Common myeloid progenitor, CD34-positive (primary cell): ENCODE measurements at regions of chrX and their contacts with region 1.

Region 1: DNA sequence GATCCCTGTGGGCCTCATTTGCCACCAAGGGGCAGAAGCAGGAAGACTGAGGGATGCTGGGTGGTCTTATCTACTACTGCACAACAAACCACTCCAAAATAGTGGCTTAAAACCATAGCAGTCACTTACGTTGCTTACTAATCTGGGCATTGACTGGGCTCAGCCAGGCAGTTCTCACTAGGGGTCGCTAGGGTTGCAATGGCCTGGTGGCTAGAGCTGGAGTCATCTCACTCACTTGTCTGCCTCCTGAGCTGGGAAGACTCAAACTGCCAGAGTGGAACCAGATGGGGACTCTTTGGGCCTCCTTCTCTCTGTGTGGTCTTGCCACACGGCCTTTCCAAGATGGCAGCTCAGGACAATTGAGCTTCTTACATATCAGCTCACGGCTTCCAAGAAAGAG is 216.3 kb upstream of the BCOR start:
- DNase-seq: peak; percentile 32 to 60 (median 53)
- H3K4me3 ChIP-seq: no peak overlapping the region
- H3K27ac ChIP-seq: no peak overlapping the region
- H3K4me1 ChIP-seq: peaks cover 0 to 9% (median 2%) of the 10 kb centered on the region in 4 experiments
- H3K27me3 ChIP-seq: peaks cover 0 to 2% (median 0%) of the 10 kb centered on the region in 5 experiments

Region 2: DNA sequence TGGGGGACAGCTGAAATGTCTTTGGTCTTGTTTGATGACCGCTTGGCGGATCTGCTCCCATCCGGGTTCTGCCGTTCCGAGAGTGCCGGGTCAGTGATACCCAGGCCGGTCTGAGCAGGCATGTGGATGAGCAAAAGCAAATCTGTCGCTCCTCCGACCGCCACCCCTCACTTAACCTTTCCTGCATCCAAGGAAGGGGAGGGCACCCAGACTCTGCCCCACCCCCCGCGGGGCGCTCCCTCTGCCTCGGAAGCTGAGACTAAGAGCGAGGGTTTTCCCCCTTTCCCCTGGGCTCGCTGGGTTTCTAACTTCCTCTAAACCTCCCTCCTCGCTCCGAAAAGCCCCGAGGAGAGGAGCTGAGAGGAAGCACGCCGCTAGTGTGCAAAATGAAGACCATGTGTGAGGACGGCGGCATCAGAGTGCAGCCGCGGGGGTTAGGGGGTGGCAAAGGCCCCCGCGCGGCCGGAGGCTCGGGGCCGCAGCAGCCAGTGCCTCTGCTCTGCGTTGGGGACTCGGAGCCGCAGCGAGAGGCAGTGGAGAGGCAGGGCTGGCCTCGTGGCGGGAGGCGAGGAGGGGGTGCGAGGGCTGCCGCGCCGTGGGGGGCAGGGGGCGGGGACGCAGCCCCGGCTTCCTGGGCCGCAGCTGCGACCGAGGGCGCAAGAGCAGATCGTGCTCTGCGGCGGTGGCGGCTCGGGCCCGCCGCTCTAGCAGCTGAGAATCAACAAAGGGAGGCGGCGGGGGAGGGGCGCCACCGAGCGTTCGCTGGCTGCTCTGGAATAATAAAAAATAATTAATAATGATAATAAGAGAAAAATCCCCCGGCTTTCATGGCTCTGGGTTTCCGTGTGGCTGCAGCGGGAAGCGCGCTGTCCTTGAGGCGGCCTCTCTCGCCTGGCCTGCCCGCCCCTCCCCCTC is 160.5 kb before region 1 on chrX:
- CTCF ChIA-PET with region 1: no interaction called
- POLR2A ChIA-PET with region 1: no interaction called
- DNase-seq: peak; percentile 55 to 86 (median 86)
- H3K4me3 ChIP-seq: peak overlapping the region; percentile 26 to 75 (median 59)
- H3K27ac ChIP-seq: peak overlapping the region in 1 of 2 experiments; percentile 64
- H3K4me1 ChIP-seq: peaks cover 11 to 81% (median 66%) of the 10 kb centered on the region in 4 experiments
- H3K27me3 ChIP-seq: peaks cover 0 to 97% (median 0%) of the 10 kb centered on the region in 5 experiments

Region 3: GRCh38 chrX:40298572-40299479 is 15.2 kb before region 1 on chrX:
- CTCF ChIA-PET with region 1: interaction called, 11 read pairs
- POLR2A ChIA-PET with region 1: no interaction called
- DNase-seq: peak in 1 of 3 donors; percentile 28
- H3K4me3 ChIP-seq: no peak overlapping the region
- H3K27ac ChIP-seq: no peak overlapping the region
- H3K4me1 ChIP-seq: peaks cover 0 to 8% (median 0%) of the 10 kb centered on the region in 4 experiments
- H3K27me3 ChIP-seq: peaks cover 0 to 10% (median 0%) of the 10 kb centered on the region in 5 experiments

Region 4: GRCh38 chrX:40343319-40343718 is 29.2 kb after region 1 on chrX:
- CTCF ChIA-PET with region 1: no interaction called
- POLR2A ChIA-PET with region 1: no interaction called
- DNase-seq: no peak
- H3K4me3 ChIP-seq: no peak overlapping the region
- H3K27ac ChIP-seq: no peak overlapping the region
- H3K4me1 ChIP-seq: no peaks in the 10 kb centered on the region
- H3K27me3 ChIP-seq: no peaks in the 10 kb centered on the region

Region 5: DNA sequence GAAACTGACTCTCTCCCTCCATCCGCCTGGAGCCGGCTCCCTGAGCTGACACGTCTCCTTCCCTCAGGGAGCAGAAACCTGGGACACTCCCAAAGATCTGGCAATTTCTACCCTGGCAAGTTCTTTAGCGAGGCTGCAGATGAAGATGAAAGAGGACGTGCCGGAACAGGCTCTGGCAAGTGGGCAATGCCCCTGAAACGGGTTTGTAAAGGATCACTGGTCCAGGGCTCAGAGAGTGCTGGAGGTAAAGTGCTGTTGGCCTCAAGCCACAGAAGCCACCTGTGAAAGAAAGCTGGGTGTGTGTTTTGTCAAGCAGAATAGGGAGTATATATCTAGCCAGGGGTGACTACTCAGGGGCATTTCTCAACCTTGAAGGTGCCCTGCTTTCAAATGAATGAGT is 135.3 kb after region 1 on chrX:
- CTCF ChIA-PET with region 1: no interaction called
- POLR2A ChIA-PET with region 1: no interaction called
- DNase-seq: no peak
- H3K4me3 ChIP-seq: no peak overlapping the region
- H3K27ac ChIP-seq: no peak overlapping the region
- H3K4me1 ChIP-seq: no peaks in the 10 kb centered on the region
- H3K27me3 ChIP-seq: peaks cover 0 to 21% (median 0%) of the 10 kb centered on the region in 5 experiments

Region 6: DNA sequence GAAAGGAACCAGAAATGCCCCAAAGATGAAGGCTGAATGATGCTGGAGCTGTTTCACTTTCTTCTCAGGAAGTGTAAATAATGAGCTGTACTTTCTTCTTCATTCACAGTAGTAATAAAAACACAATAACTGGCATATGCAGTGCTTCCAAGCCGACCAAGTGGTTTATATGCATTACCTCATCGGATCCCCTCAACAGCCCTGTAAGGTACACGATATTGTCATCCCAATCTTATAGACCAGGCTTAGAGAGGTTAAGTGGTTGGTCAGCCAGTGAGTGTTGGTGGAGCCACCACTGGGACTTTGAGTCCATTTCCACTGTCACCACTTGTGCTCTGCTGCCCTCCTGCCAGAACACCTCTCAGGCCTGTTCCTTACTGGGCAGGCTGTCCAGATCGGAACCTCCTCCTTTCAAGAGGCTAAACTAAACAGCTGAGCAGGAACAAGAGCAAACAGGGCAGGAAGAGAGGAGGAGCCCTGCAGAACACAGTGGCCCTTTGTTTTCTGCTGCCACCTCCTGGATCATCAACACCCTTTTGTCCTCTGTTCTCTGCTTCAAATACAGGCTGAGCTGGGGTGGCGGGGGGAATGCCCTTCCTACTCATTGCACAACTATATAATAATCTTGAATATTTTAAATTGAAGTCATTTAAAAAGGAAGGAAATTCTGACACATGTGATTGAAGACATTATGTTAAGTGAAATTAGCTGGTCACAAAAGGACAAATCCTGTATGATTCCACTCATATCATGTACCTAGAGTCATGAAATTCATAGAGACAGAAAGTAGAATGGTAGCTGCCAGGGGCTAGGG is 154.2 kb after region 1 on chrX:
- CTCF ChIA-PET with region 1: interaction called, 12 read pairs
- POLR2A ChIA-PET with region 1: no interaction called
- DNase-seq: peak; percentile 54 to 81 (median 79)
- H3K4me3 ChIP-seq: peak overlapping the region in 1 of 7 experiments; percentile 5
- H3K27ac ChIP-seq: no peak overlapping the region
- H3K4me1 ChIP-seq: peaks cover 3 to 24% (median 14%) of the 10 kb centered on the region in 4 experiments
- H3K27me3 ChIP-seq: peaks cover 0 to 6% (median 0%) of the 10 kb centered on the region in 5 experiments

Region 7: GRCh38 chrX:40705658-40706312 is 391.7 kb after region 1 on chrX:
- CTCF ChIA-PET with region 1: no interaction called
- POLR2A ChIA-PET with region 1: no interaction called
- DNase-seq: no peak
- H3K4me3 ChIP-seq: no peak overlapping the region
- H3K27ac ChIP-seq: peak overlapping the region in 1 of 2 experiments; percentile 29
- H3K4me1 ChIP-seq: no peaks in the 10 kb centered on the region
- H3K27me3 ChIP-seq: peaks cover 0 to 18% (median 0%) of the 10 kb centered on the region in 5 experiments